ENCODE measurements at regions of chr3 and their contacts with region 1.

Region 1: DNA sequence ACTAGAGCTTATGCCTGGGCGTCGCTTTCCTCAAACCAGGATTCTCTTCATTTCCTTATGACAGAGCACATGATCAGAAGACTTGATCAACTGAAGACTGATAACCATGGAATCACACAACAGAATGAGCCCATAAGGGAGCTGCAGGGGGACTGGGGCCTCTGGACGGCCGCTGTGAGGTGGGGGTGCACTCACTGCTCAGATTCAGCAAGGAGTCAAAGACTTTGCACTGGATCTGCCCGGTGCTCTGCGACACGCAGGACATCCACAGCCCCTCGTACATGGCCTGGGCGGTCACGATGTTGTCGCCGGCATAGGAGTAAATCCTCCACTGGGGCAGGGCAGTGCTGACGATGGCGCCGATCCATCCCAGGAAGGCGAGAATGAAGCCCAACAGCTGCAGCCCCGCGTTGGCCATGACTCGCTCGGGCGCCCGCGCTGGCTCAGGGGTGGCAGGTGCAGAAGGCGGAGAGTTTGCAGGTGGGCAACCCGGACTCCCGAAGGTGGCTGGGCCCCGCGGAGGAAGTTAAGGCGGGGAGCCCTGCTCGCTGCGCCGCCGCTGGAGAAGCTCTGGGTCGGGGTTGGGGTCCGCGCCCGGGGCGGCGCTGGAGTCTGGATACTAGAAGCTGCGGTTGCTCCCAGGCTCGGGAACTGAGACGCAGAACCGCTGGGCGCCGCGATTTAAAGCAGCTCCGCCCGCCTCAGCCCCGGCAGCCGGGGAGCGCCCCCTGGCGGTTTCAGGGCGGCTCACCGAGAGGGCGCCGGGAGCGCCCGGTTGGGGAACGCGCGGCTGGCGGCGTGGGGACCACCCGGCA is at the start of gene CLDN1:
- DNase-seq: peak; percentile 88 to 92 (median 88)
- ATAC-seq: peak; percentile 87
- H3K4me3 ChIP-seq: peak within 1 kb of the TSS; percentile 41
- H3K27ac ChIP-seq: peak within 1 kb of the TSS; percentile 81 to 92 (median 86)
- H3K4me1 ChIP-seq: peaks cover 20% of the 10 kb centered on the region
- H3K27me3 ChIP-seq: no peaks in the 10 kb centered on the region
- CTCF ChIP-seq: peak; percentile 91 to 98 (median 96)
- POLR2A ChIP-seq: peak; percentile 86 to 93 (median 93)
- total RNA-seq, gene CLDN1: 33.3 to 57.9 TPM

Region 2: GRCh38 chr3:189974359-189974758 is 347.6 kb before region 1 on chr3:
- intact Hi-C with region 1: loop called (anchors 5 kb)
- DNase-seq: no peak
- ATAC-seq: no peak
- H3K4me3 ChIP-seq: no peak overlapping the region
- H3K27ac ChIP-seq: no peak overlapping the region
- H3K4me1 ChIP-seq: no peaks in the 10 kb centered on the region
- H3K27me3 ChIP-seq: no peaks in the 10 kb centered on the region
- CTCF ChIP-seq: no peak
- POLR2A ChIP-seq: no peak

Region 3: DNA sequence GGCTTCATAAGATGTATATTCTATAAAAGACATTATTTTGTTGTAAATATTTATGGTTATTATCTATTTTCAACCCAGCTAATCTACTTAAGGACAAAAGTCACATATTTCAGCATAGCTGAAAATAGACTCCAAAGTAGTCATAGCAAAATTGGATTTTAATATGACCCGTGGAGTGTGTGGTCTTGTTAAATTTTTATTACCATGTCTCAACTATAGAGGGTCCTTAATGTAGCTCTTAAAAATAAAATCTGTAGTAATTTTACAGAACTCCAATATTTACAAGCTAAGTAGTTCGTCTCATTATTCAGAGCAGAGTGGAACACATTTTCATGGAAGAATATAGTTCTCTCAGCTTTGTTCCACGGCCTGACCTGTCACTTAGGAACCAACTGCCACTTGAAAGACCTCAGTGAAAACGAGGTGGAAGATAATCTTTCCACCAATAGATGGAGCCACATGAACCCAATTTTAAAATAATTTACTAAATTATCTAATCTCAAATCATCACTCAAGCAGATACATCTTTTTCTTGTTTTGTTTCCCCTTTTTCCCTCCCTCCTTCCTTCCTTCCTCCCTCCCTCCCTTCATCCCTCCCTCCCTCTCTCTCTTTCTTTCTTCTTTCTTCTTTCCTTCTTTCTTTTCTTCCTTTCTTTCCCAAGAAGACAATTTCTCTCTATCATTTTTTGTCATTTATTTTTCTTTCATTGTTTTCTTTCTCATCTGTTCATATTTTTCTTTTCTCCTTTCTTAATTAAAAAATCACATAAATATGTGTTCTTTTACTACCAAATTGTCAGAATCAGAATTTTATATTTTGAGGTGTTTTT is 96.9 kb before region 1 on chr3:
- intact Hi-C with region 1: loop called (anchors 5 kb)
- DNase-seq: peak in 2 of 4 donors; percentile 10 to 24
- ATAC-seq: no peak
- H3K4me3 ChIP-seq: no peak overlapping the region
- H3K27ac ChIP-seq: no peak overlapping the region
- H3K4me1 ChIP-seq: peaks cover under 1% of the 10 kb centered on the region
- H3K27me3 ChIP-seq: no peaks in the 10 kb centered on the region
- CTCF ChIP-seq: peak in 6 of 7 experiments; percentile 40 to 80 (median 58)
- POLR2A ChIP-seq: no peak